ENCODE measurements at regions of chr10 and their contacts with region 1.

Region 1: GRCh38 chr10:117167789-117168674 is 29.3 kb upstream of the KCNK18 start:
- DNase-seq: peak; percentile 84
- ATAC-seq: peak; percentile 62
- H3K4me3 Mint-ChIP-seq: peak overlapping the region; percentile 68
- H3K27ac Mint-ChIP-seq: no peak overlapping the region
- H3K4me1 Mint-ChIP-seq: peaks cover 35% of the 10 kb centered on the region
- H3K27me3 Mint-ChIP-seq: peaks cover 100% of the 10 kb centered on the region
- CTCF ChIP-seq: peak; percentile 99

Region 2: GRCh38 chr10:116796910-116797513 is 371.0 kb before region 1 on chr10:
- CTCF ChIA-PET with region 1: interaction called, 63 read pairs
- POLR2A ChIA-PET with region 1: no interaction called
- DNase-seq: peak; percentile 86
- ATAC-seq: peak; percentile 89
- H3K4me3 Mint-ChIP-seq: no peak overlapping the region
- H3K27ac Mint-ChIP-seq: no peak overlapping the region
- H3K4me1 Mint-ChIP-seq: peaks cover 25% of the 10 kb centered on the region
- H3K27me3 Mint-ChIP-seq: peaks cover 8% of the 10 kb centered on the region
- CTCF ChIP-seq: peak; percentile 85

Region 3: GRCh38 chr10:117094856-117095255 is 73.2 kb before region 1 on chr10:
- CTCF ChIA-PET with region 1: interaction called, 12 read pairs
- POLR2A ChIA-PET with region 1: no interaction called
- DNase-seq: no peak
- ATAC-seq: peak; percentile 89
- H3K4me3 Mint-ChIP-seq: no peak overlapping the region
- H3K27ac Mint-ChIP-seq: no peak overlapping the region
- H3K4me1 Mint-ChIP-seq: peaks cover 39% of the 10 kb centered on the region
- H3K27me3 Mint-ChIP-seq: no peaks in the 10 kb centered on the region
- CTCF ChIP-seq: no peak

Region 4: DNA sequence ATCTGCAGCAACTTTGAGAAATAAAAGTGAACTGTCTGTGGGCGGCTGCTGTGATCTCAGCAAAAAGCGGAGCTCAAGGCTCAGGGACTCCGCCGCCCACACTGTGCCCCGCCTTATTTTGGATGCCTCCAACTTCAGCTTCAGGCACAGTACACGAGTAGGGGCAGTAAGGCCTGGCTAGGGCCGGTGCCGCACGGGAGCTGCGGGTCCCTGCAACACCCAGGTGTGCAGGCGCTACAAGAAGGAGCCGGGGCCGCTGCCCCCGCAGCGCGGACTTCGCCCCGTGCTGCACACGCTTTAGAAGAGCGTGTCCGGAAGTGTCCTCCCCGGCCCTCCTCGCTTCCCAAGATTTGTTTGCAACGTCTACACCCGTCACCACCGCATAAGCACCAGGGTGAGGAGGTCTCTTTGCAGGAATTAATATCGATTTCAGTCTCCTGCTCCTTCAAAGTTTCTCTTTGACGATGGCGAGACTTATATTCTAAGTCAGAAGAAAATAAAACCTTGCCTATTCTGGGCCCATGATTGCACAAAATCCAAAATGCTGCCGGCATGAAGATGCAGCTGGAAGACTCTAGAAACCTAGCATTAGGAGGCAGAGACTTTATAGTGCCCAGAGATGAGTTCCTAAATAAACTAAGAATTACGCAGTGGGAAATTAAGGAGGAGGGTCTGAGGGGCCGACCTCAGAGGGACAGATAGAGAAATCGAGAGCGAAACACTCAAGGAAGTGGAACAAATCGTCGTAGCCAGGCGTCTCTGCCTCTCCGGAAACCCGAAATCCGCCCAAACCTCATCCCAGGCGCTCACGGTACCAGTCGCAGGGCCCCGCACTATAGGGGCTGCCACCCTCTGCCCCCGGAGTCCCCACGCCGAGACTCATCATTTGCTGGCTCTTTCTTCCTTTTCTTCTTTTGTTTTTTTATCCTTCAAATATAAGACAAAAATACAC is 36.4 kb before region 1 on chr10:
- CTCF ChIA-PET with region 1: interaction called, 72 read pairs
- POLR2A ChIA-PET with region 1: interaction called, 3 read pairs
- DNase-seq: peak; percentile 47
- ATAC-seq: peak; percentile 23
- H3K4me3 Mint-ChIP-seq: peak overlapping the region; percentile 54
- H3K27ac Mint-ChIP-seq: no peak overlapping the region
- H3K4me1 Mint-ChIP-seq: peaks cover 56% of the 10 kb centered on the region
- H3K27me3 Mint-ChIP-seq: peaks cover 98% of the 10 kb centered on the region
- CTCF ChIP-seq: no peak

Measured in WTC11 (cell line).